ENCODE measurements at regions of chr11 and their contacts with region 1.

Region 1: DNA sequence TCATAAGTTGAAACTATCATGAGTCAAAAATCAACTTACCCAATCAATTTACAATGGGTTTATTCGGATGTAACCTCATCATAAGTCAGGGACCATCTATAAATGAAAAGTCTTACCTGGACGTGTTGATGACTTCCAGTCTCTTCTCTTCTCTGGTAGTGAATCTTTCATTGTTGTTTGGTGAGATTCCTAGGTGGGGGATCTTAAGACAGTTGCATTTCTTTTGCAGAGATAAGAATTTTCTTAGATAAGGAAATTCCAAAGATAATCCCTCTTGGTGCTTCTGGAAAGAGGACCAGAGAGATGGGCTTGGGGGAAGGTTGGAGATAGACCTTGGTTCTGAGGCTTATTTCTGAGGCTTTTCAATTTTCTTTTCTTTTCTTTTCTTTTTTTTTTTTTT is 21.3 kb upstream of the BACE1-AS start:
- DNase-seq: no peak

Region 2: DNA sequence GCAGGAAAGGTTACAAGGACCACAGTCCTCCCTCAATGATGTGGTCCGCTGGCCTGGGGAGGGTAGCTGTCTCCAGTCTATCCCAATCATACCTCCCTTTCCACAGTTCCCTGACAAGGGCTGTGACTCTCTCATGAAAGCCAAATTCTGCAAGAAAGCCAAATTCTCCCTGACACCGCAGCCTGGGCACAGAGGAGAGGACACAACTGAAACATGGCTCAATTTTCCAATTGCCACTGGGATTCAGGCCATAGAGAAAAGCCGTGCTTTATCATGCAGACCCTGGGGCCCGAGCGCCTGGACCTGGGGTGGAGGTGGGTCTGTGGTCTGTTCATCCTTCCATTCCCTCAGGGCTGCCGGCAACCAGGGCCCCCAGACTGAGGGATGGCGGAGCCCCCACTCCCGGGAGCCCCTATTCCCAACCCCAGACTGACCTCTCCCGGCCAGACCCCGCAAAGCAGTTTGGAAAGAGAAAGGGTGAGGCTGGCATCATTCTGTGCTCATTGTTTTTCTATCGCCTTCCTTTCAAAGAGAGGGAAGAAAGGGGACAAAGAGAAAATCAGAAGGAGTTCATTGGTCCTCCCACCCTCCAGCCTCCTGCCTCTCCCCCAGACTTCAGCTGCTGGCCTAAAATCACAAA is 736.5 kb before region 1 on chr11:
- intact Hi-C with region 1: loop called in 1 of 2 experiments (anchors 10 kb)
- DNase-seq: peak; percentile 53